Activated CD4-positive, alpha-beta T cell treated with anti-CD3 and anti-CD28 coated beads for 36 hours (primary cell): ENCODE measurements at regions of chr17 and their contacts with region 1.

Region 1: GRCh38 chr17:3411070-3411469 is at the start of gene OR3A3:
- DNase-seq: no peak
- ATAC-seq: no peak
- H3K4me3 Mint-ChIP-seq: no peak within 1 kb of the TSS
- H3K27ac Mint-ChIP-seq: no peak within 1 kb of the TSS
- H3K4me1 Mint-ChIP-seq: no peaks in the 10 kb centered on the region
- H3K27me3 Mint-ChIP-seq: peaks cover 28% of the 10 kb centered on the region
- total RNA-seq, gene OR3A3: not detected

Region 2: GRCh38 chr17:3282901-3283300 is 128.2 kb before region 1 on chr17:
- CTCF ChIA-PET with region 1: no interaction called
- POLR2A ChIA-PET with region 1: no interaction called
- intact Hi-C with region 1: loop called in 1 of 2 experiments (anchors 5 kb)
- DNase-seq: no peak
- ATAC-seq: no peak
- H3K4me3 Mint-ChIP-seq: no peak overlapping the region
- H3K27ac Mint-ChIP-seq: no peak overlapping the region
- H3K4me1 Mint-ChIP-seq: no peaks in the 10 kb centered on the region
- H3K27me3 Mint-ChIP-seq: no peaks in the 10 kb centered on the region

Region 3: GRCh38 chr17:3893003-3893719 is 482.1 kb after region 1 on chr17 and contains the start of gene CAMKK1:
- CTCF ChIA-PET with region 1: no interaction called
- POLR2A ChIA-PET with region 1: no interaction called
- intact Hi-C with region 1: no loop called
- DNase-seq: peak; percentile 94
- ATAC-seq: peak; percentile 88
- H3K4me3 Mint-ChIP-seq: peak within 1 kb of the TSS; percentile 76
- H3K27ac Mint-ChIP-seq: peak within 1 kb of the TSS; percentile 77
- H3K4me1 Mint-ChIP-seq: peaks cover 36% of the 10 kb centered on the region
- H3K27me3 Mint-ChIP-seq: no peaks in the 10 kb centered on the region
- total RNA-seq, gene CAMKK1: 4.5 to 5.4 TPM